WTC11 (cell line): ENCODE measurements at regions of chr14 and their contacts with region 1.

Region 1: GRCh38 chr14:65958664-65959562 is 527.3 kb upstream of the CCDC196 start:
- DNase-seq: no peak
- ATAC-seq: peak; percentile 35
- H3K4me3 Mint-ChIP-seq: no peak overlapping the region
- H3K27ac Mint-ChIP-seq: no peak overlapping the region
- H3K4me1 Mint-ChIP-seq: peaks cover 31% of the 10 kb centered on the region
- H3K27me3 Mint-ChIP-seq: no peaks in the 10 kb centered on the region
- CTCF ChIP-seq: peak; percentile 27; the same call in 1 of the 2 replicates

Region 2: GRCh38 chr14:65412032-65412846 is 546.7 kb before region 1 on chr14 and contains the start of gene FUT8:
- CTCF ChIA-PET with region 1: interaction called, 28 read pairs
- POLR2A ChIA-PET with region 1: interaction called, 7 read pairs
- DNase-seq: peak; percentile 96
- ATAC-seq: peak; percentile 82
- H3K4me3 Mint-ChIP-seq: peak within 1 kb of the TSS; percentile 93
- H3K27ac Mint-ChIP-seq: peak within 1 kb of the TSS; percentile 97
- H3K4me1 Mint-ChIP-seq: peaks cover 25% of the 10 kb centered on the region
- H3K27me3 Mint-ChIP-seq: peaks cover 7% of the 10 kb centered on the region; the same call in 1 of the 2 replicates
- CTCF ChIP-seq: no peak
- total RNA-seq, gene FUT8: 28.6 to 37.9 TPM (median 31.9 TPM) in 3 replicates

Region 3: GRCh38 chr14:65915125-65915524 is 43.8 kb before region 1 on chr14:
- CTCF ChIA-PET with region 1: no interaction called
- POLR2A ChIA-PET with region 1: no interaction called
- DNase-seq: no peak
- ATAC-seq: no peak
- H3K4me3 Mint-ChIP-seq: no peak overlapping the region
- H3K27ac Mint-ChIP-seq: no peak overlapping the region
- H3K4me1 Mint-ChIP-seq: peaks cover 37% of the 10 kb centered on the region
- H3K27me3 Mint-ChIP-seq: no peaks in the 10 kb centered on the region
- CTCF ChIP-seq: no peak

Region 4: DNA sequence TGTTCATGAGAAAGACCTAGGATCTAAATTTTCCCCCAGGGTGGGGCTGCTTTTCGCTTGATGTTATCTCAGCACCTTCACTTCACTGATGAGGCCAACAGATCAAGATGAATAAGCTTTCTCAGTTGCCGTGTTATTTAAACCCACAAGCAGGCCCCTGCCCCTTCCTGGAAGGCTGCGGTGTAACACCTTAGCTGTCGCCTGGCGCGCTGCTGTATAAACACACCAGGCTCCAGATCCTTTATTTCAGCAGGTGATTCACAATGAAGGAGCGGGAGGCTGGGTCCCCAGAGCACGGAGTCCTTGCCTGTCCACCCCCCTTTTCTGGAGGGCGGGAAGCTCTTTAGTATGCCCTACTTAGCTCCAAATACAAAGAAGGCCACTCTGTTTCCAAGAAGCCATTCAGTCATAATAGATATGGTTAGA is 31.0 kb before region 1 on chr14:
- CTCF ChIA-PET with region 1: interaction called, 16 read pairs
- POLR2A ChIA-PET with region 1: no interaction called
- DNase-seq: peak; percentile 24
- ATAC-seq: peak; percentile 45
- H3K4me3 Mint-ChIP-seq: no peak overlapping the region
- H3K27ac Mint-ChIP-seq: 0 out of 2 replicates have a peak overlapping the region, but pooled peaks have one; percentile 77
- H3K4me1 Mint-ChIP-seq: peaks cover 47% of the 10 kb centered on the region
- H3K27me3 Mint-ChIP-seq: no peaks in the 10 kb centered on the region
- CTCF ChIP-seq: no peak

Region 5: DNA sequence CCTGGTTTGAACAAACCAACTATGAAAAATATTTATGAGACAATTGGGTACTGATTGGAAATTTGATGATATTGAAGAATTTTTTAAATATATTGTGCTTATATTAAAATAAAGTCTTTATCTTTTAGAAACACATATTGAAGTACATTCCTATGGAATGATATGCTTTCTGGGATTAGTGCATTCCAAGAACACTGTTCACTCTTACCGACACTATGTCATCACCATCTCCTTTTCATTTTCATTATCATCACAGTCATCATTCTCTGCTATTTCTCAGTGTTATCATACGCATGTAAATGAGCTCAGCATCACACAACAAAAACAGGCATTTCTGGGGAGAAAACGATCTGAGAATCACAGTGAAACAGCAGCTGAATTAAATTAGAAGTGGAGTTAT is 14.0 kb after region 1 on chr14:
- CTCF ChIA-PET with region 1: interaction called, 11 read pairs
- POLR2A ChIA-PET with region 1: no interaction called
- DNase-seq: no peak
- ATAC-seq: no peak
- H3K4me3 Mint-ChIP-seq: no peak overlapping the region
- H3K27ac Mint-ChIP-seq: no peak overlapping the region
- H3K4me1 Mint-ChIP-seq: peaks cover 27% of the 10 kb centered on the region
- H3K27me3 Mint-ChIP-seq: no peaks in the 10 kb centered on the region
- CTCF ChIP-seq: no peak

Region 6: GRCh38 chr14:66070509-66071319 is 111.8 kb after region 1 on chr14:
- CTCF ChIA-PET with region 1: interaction called, 32 read pairs
- POLR2A ChIA-PET with region 1: no interaction called
- DNase-seq: peak; percentile 91
- ATAC-seq: peak; percentile 97
- H3K4me3 Mint-ChIP-seq: no peak overlapping the region
- H3K27ac Mint-ChIP-seq: no peak overlapping the region
- H3K4me1 Mint-ChIP-seq: peaks cover 19% of the 10 kb centered on the region
- H3K27me3 Mint-ChIP-seq: no peaks in the 10 kb centered on the region
- CTCF ChIP-seq: peak; percentile 88